HEK293 (cell line): ENCODE measurements at regions of chr5 and their contacts with region 1.

Region 1: GRCh38 chr5:172450861-172451695 is 3.2 kb downstream of the SH3PXD2B start:
- H3K4me3 ChIP-seq: no peak overlapping the region
- H3K27ac ChIP-seq: no peak overlapping the region
- H3K4me1 ChIP-seq: no peaks in the 10 kb centered on the region; the same call in 1 of the 2 replicates
- CTCF ChIP-seq: peak; percentile 68

Region 2: GRCh38 chr5:172420240-172420943 is 30.7 kb before region 1 on chr5:
- CTCF ChIA-PET with region 1: interaction called, 16 read pairs
- POLR2A ChIA-PET with region 1: no interaction called
- H3K4me3 ChIP-seq: no peak overlapping the region
- H3K27ac ChIP-seq: no peak overlapping the region
- H3K4me1 ChIP-seq: no peaks in the 10 kb centered on the region
- CTCF ChIP-seq: no peak

Region 3: GRCh38 chr5:172437445-172438308 is 13.4 kb before region 1 on chr5:
- CTCF ChIA-PET with region 1: interaction called, 67 read pairs
- POLR2A ChIA-PET with region 1: interaction called, 3 read pairs
- H3K4me3 ChIP-seq: no peak overlapping the region
- H3K27ac ChIP-seq: peak overlapping the region; percentile 43; the same call in 1 of the 2 replicates
- H3K4me1 ChIP-seq: peaks cover 13% of the 10 kb centered on the region
- CTCF ChIP-seq: no peak